Activated B cell treated with CpG ODN at 0.5 μM for 24 hours (primary cell): ENCODE measurements at regions of chr2 and their contacts with region 1.

Region 1: DNA sequence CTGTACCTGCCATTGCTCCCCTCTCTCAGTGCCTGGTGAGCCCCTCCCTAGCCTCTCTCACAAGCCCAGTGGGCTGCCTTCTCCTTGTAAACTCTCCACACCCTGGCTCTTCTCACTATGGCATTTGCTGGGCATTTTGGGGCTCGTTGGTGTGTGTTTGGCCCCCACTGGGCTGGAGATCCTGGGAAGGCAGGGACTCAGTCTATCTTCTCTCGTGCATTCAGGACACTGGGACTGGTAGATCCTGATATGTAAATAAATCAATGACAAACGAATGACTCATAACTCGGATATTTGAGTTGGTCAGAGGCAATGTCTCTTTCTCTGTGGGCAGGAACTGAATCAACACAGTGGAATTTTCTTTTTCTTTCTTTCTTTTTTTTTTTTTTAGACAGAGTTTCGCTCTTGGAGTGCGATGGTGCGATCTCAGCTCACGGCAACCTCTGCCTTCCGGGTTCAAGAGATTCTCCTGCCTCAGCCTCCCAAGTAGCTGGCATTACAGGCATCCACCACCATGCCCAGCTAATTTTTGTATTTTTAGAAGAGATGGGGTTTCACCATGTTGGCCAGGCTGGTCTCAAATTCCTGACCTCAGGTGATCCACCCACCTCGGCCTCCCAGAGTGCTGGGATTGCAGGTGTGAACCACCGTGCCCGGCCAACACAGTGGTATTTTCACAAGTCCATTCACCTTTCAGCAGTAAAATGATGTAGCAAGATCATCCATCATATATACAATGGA is 144.6 kb upstream of the SPRED2 start:
- DNase-seq: no peak
- ATAC-seq: no peak
- H3K4me3 Mint-ChIP-seq: no peak overlapping the region
- H3K27ac Mint-ChIP-seq: no peak overlapping the region
- H3K4me1 Mint-ChIP-seq: peaks cover 6% of the 10 kb centered on the region
- H3K27me3 Mint-ChIP-seq: peaks cover 2% of the 10 kb centered on the region
- CTCF ChIP-seq: no peak

Region 2: DNA sequence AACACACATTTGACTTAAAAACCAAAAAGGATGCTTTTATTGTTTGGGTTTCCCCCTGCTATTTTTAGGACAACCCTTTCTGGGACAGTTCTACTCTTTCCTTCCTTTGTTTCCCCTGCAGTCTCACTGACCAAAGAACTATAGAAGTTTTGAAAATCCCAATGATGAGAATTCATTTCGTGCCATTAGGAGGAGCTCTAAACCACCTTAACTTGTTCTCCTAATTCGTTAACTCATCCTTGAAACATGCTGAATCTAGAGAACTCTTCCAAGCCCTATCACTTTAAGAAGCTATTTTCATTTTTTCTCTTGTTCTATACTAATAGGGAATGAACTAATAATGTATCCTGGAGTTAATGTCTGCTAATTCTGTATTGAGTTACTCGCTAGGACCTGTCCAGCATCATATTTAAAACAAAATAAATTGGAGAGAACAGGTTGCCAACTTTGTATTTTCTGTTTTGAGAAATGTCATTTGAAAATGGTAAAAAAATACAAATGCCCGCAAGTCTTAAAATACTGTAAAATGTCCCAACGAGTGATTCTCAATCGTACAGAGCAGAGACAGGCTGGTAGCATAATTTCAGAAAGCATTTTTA is 990.0 kb before region 1 on chr2:
- CTCF ChIA-PET with region 1: no interaction called
- POLR2A ChIA-PET with region 1: interaction called, 3 read pairs
- intact Hi-C with region 1: loop called (anchors 10 kb)
- DNase-seq: no peak
- ATAC-seq: peak; percentile 62
- H3K4me3 Mint-ChIP-seq: no peak overlapping the region
- H3K27ac Mint-ChIP-seq: peak overlapping the region; percentile 50
- H3K4me1 Mint-ChIP-seq: peaks cover 17% of the 10 kb centered on the region
- H3K27me3 Mint-ChIP-seq: no peaks in the 10 kb centered on the region
- CTCF ChIP-seq: peak; percentile 77

Region 3: GRCh38 chr2:65040400-65041261 is 536.4 kb before region 1 on chr2:
- CTCF ChIA-PET with region 1: no interaction called
- POLR2A ChIA-PET with region 1: no interaction called
- intact Hi-C with region 1: loop called (anchors 2 kb)
- DNase-seq: peak; percentile 59
- ATAC-seq: peak; percentile 99
- H3K4me3 Mint-ChIP-seq: no peak overlapping the region
- H3K27ac Mint-ChIP-seq: peak overlapping the region; percentile 20
- H3K4me1 Mint-ChIP-seq: peaks cover 11% of the 10 kb centered on the region
- H3K27me3 Mint-ChIP-seq: no peaks in the 10 kb centered on the region
- CTCF ChIP-seq: peak; percentile 55

Region 4: GRCh38 chr2:65186872-65187851 is 389.9 kb before region 1 on chr2:
- CTCF ChIA-PET with region 1: no interaction called
- POLR2A ChIA-PET with region 1: no interaction called
- intact Hi-C with region 1: loop called (anchors 1 kb)
- DNase-seq: peak; percentile 38
- ATAC-seq: peak; percentile 91
- H3K4me3 Mint-ChIP-seq: no peak overlapping the region
- H3K27ac Mint-ChIP-seq: no peak overlapping the region
- H3K4me1 Mint-ChIP-seq: peaks cover 4% of the 10 kb centered on the region
- H3K27me3 Mint-ChIP-seq: peaks cover 11% of the 10 kb centered on the region
- CTCF ChIP-seq: no peak

Region 5: GRCh38 chr2:65264821-65265670 is 312.0 kb before region 1 on chr2:
- CTCF ChIA-PET with region 1: interaction called, 5 read pairs
- POLR2A ChIA-PET with region 1: no interaction called
- intact Hi-C with region 1: loop called (anchors 1 kb)
- DNase-seq: no peak
- ATAC-seq: peak; percentile 25
- H3K4me3 Mint-ChIP-seq: no peak overlapping the region
- H3K27ac Mint-ChIP-seq: peak overlapping the region; percentile 12
- H3K4me1 Mint-ChIP-seq: peaks cover 8% of the 10 kb centered on the region
- H3K27me3 Mint-ChIP-seq: no peaks in the 10 kb centered on the region
- CTCF ChIP-seq: no peak

Region 6: DNA sequence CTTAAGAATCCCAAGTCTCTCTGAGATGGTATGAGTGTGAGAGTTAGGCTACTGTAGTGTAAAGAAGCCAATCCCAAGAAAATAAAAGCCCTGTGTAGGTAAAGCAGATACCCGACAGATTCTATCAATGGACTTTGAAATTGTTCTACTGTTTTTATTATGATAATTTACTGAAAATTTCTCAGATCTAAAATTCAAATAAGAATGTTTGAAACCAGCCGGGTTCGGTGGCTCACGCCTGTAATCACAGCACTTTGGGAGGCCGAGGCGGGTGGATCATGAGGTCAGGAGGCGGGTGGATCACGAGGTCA is 63.7 kb after region 1 on chr2:
- CTCF ChIA-PET with region 1: interaction called, 7 read pairs
- POLR2A ChIA-PET with region 1: no interaction called
- intact Hi-C with region 1: loop called (anchors 2 kb)
- DNase-seq: no peak
- ATAC-seq: no peak
- H3K4me3 Mint-ChIP-seq: no peak overlapping the region
- H3K27ac Mint-ChIP-seq: no peak overlapping the region
- H3K4me1 Mint-ChIP-seq: peaks cover 4% of the 10 kb centered on the region
- H3K27me3 Mint-ChIP-seq: peaks cover 13% of the 10 kb centered on the region
- CTCF ChIP-seq: no peak